Activated CD8-positive, alpha-beta T cell treated with anti-CD3 and anti-CD28 coated beads for 36 hours (primary cell): ENCODE measurements at regions of chr1 and their contacts with region 1.

Region 1: GRCh38 chr1:26820784-26821269 is 5.7 kb upstream of the ZDHHC18 start:
- DNase-seq: peak; percentile 49
- ATAC-seq: peak; percentile 86
- H3K4me3 Mint-ChIP-seq: peak overlapping the region; percentile 50
- H3K27ac Mint-ChIP-seq: peak overlapping the region; percentile 80
- H3K4me1 Mint-ChIP-seq: peaks cover 22% of the 10 kb centered on the region
- H3K27me3 Mint-ChIP-seq: no peaks in the 10 kb centered on the region
- CTCF ChIP-seq: peak; percentile 22

Region 2: DNA sequence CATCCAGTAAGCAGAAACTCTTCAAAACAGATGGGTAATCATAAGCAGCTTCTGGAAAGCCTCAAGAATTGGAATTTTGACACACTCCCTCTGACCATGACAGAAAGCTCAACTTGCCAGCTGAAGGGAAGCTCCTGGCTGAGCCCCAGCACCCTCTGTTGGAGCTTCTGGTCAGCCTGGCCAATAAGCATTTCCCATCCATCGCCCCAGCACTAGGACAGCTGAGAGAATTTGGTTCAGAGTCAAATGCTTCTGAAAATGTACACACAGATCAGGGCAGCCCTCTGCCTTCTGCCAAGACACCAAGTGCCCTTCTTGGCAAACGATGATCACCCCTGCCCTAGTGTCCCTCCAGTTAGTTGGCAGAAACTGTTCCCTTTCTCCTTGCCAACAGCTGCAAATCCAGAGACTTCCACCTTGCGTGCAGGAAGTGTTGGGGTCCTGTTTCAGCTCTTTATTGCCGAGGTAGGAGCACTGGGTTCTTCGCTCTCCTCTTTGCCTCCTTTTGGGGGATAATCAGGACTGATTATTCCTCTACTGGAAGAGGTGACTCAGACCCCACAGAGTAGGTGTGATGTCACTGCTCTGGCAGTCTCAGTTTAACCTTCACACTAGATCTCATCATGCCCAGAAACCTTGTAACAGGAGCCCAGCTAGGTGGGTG is 21.2 kb before region 1 on chr1:
- CTCF ChIA-PET with region 1: interaction called, 13 read pairs
- POLR2A ChIA-PET with region 1: interaction called, 6 read pairs
- intact Hi-C with region 1: no loop called
- DNase-seq: peak; percentile 62
- ATAC-seq: peak; percentile 80
- H3K4me3 Mint-ChIP-seq: peak overlapping the region; percentile 64
- H3K27ac Mint-ChIP-seq: peak overlapping the region; percentile 96
- H3K4me1 Mint-ChIP-seq: peaks cover 47% of the 10 kb centered on the region
- H3K27me3 Mint-ChIP-seq: no peaks in the 10 kb centered on the region
- CTCF ChIP-seq: no peak

Region 3: GRCh38 chr1:26833432-26834405 is 12.9 kb after region 1 on chr1:
- CTCF ChIA-PET with region 1: interaction called, 26 read pairs
- POLR2A ChIA-PET with region 1: interaction called, 6 read pairs
- intact Hi-C with region 1: no loop called
- DNase-seq: peak; percentile 95
- ATAC-seq: peak; percentile 94
- H3K4me3 Mint-ChIP-seq: peak overlapping the region; percentile 62
- H3K27ac Mint-ChIP-seq: peak overlapping the region; percentile 98
- H3K4me1 Mint-ChIP-seq: peaks cover 67% of the 10 kb centered on the region
- H3K27me3 Mint-ChIP-seq: no peaks in the 10 kb centered on the region
- CTCF ChIP-seq: no peak

Region 4: DNA sequence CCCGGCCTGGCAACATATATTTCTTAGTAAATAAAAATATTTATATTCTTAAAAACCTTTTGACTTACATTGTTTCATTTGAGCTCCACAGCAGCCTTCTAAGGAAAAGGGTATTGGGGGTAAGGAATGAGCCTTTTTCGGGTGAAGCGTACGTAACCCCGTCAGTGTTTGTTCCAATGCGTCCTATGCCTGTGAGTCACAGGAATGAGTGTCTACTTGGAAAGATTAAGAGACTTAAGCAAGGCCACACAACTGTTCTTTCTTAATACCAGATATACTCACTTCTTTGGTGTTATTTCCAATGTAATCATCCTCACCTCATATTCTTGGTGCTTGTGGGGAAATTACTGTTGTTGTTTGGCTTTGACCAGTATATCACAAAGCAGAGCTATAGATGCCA is 436.3 kb after region 1 on chr1:
- CTCF ChIA-PET with region 1: no interaction called
- POLR2A ChIA-PET with region 1: no interaction called
- intact Hi-C with region 1: no loop called
- DNase-seq: no peak
- ATAC-seq: no peak
- H3K4me3 Mint-ChIP-seq: no peak overlapping the region
- H3K27ac Mint-ChIP-seq: no peak overlapping the region
- H3K4me1 Mint-ChIP-seq: peaks cover 42% of the 10 kb centered on the region
- H3K27me3 Mint-ChIP-seq: no peaks in the 10 kb centered on the region
- CTCF ChIP-seq: no peak